SK-N-SH (cell line): ENCODE measurements at regions of chr15 and their contacts with region 1.

Region 1: GRCh38 chr15:74382004-74382816 is 14.8 kb upstream of the CYP11A1 start:
- DNase-seq: peak; percentile 91
- H3K4me3 ChIP-seq: peak overlapping the region in 1 of 2 experiments; percentile 22; a peak in 1 of 4 replicates
- H3K27ac ChIP-seq: no peak overlapping the region
- H3K4me1 ChIP-seq: peaks cover 0 to 14% of the 10 kb centered on the region in 2 experiments; a peak in 1 of 4 replicates
- H3K27me3 ChIP-seq: no peaks in the 10 kb centered on the region
- CTCF ChIP-seq: peak; percentile 95
- EP300 ChIP-seq: no peak
- RAD21 ChIP-seq: peak; percentile 91

Region 2: DNA sequence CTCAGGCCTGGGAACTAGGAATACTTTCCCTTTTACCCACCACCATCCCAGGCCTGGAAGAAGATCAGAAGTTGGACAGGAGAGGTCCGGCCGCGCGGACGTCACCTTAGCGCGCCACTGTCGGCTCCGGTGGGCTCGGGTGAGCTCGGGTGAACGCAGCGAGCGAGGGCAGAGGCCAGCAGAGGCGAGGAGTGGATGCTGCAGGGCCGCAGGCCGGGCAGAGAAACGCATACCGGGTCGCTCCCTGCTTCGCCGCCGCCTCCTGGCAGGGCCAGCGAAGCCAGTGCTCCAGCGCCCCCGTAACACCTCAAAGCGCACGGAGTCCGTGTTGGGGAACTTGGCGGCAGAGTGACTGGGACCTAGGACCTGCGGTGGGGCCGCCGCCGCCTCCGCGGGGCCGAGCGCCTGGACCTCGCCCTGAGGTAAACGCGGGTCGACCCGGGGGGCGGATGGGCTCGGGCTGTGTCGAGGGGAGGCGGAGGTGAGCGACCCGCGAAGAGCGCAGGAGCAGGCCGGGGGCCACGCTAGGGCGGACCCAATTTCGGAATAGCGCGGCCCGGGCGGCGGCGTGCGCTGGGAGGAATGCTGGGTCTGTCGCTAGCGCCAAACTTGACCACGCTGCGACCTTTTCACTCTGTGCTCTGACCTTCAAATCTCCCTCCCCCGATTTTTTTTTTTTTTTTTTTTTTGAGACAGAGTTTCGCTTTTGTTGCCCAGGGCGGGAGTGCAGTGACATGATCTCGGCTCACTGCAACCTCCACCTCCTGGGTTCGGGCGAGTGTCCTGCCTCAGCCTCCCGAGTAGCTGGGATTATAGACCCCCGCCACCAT is 16.4 kb before region 1 on chr15:
- CTCF ChIA-PET with region 1: interaction called, 11 read pairs
- POLR2A ChIA-PET with region 1: no interaction called
- DNase-seq: no peak
- H3K4me3 ChIP-seq: no peak overlapping the region
- H3K27ac ChIP-seq: no peak overlapping the region
- H3K4me1 ChIP-seq: no peaks in the 10 kb centered on the region
- H3K27me3 ChIP-seq: peaks cover 7% of the 10 kb centered on the region; the same call in 1 of the 2 replicates
- CTCF ChIP-seq: no peak
- EP300 ChIP-seq: no peak
- RAD21 ChIP-seq: no peak

Region 3: DNA sequence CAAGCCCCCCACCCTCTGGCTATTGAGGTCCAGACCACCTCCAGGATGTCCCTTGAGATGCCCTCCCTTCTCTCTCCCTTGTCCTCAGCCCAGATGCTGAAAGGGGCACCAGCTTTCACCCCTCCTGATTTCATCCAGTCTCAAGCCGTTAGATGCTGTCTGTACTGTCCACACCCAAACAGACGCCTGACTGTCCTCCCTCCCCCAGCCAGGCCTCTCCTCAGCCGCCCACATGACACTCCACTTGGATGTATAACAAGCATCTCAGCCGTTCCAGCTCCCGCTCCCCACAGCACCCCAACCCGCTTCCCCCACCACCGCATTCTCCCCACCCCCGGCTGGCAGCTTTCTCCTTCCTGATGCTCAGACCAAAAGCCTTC is 10.2 kb after region 1 on chr15:
- CTCF ChIA-PET with region 1: interaction called, 17 read pairs
- POLR2A ChIA-PET with region 1: no interaction called
- DNase-seq: peak; percentile 61
- H3K4me3 ChIP-seq: no peak overlapping the region
- H3K27ac ChIP-seq: no peak overlapping the region
- H3K4me1 ChIP-seq: peaks cover 0 to 30% of the 10 kb centered on the region in 2 experiments; a peak in 1 of 4 replicates
- H3K27me3 ChIP-seq: no peaks in the 10 kb centered on the region
- CTCF ChIP-seq: no peak
- EP300 ChIP-seq: no peak
- RAD21 ChIP-seq: no peak

Region 4: GRCh38 chr15:74422650-74423430 is 40.6 kb after region 1 on chr15:
- CTCF ChIA-PET with region 1: interaction called, 779 read pairs
- POLR2A ChIA-PET with region 1: no interaction called
- DNase-seq: no peak
- H3K4me3 ChIP-seq: no peak overlapping the region
- H3K27ac ChIP-seq: no peak overlapping the region; a peak in 1 of 4 replicates
- H3K4me1 ChIP-seq: peaks cover 21 to 34% of the 10 kb centered on the region in 2 experiments; a peak in 3 of 4 replicates
- H3K27me3 ChIP-seq: no peaks in the 10 kb centered on the region
- CTCF ChIP-seq: no peak
- EP300 ChIP-seq: peak in 1 of 2 experiments; percentile 63; a peak in 1 of 4 replicates
- RAD21 ChIP-seq: no peak